PC-9 (cell line): ENCODE measurements at regions of chr3 and their contacts with region 1.

Region 1: DNA sequence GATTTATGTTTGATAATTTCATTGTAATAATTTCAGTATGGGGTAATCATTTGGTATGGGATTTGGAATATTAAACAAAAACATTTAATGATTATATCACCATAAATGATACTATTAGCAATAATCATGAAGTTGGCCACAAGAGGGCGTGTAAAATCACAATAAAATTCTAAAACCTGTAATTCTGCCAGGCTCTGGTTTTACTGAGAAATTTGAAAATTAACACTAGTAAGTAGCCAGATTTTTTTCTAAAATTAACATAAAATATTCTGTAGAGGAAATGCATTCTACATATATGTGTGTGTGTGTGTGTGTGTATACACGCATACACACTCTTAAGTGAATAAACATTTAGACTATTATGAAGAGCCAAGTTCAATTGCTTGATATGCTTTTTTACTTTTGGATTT is 40.5 kb downstream of the FEZF2 start:
- DNase-seq: no peak
- H3K4me3 ChIP-seq: no peak overlapping the region
- H3K27ac ChIP-seq: no peak overlapping the region
- H3K4me1 ChIP-seq: no peaks in the 10 kb centered on the region
- H3K27me3 ChIP-seq: no peaks in the 10 kb centered on the region
- CTCF ChIP-seq: peak; percentile 70

Region 2: GRCh38 chr3:62558549-62559112 is 225.8 kb after region 1 on chr3:
- CTCF ChIA-PET with region 1: no interaction called
- POLR2A ChIA-PET with region 1: no interaction called
- intact Hi-C with region 1: loop called (anchors 1 kb)
- DNase-seq: no peak
- H3K4me3 ChIP-seq: no peak overlapping the region
- H3K27ac ChIP-seq: no peak overlapping the region
- H3K4me1 ChIP-seq: no peaks in the 10 kb centered on the region
- H3K27me3 ChIP-seq: no peaks in the 10 kb centered on the region
- CTCF ChIP-seq: peak; percentile 66

Region 3: GRCh38 chr3:62970648-62971047 is 637.8 kb after region 1 on chr3:
- CTCF ChIA-PET with region 1: no interaction called
- POLR2A ChIA-PET with region 1: no interaction called
- intact Hi-C with region 1: no loop called
- DNase-seq: no peak
- H3K4me3 ChIP-seq: no peak overlapping the region
- H3K27ac ChIP-seq: no peak overlapping the region
- H3K4me1 ChIP-seq: no peaks in the 10 kb centered on the region
- H3K27me3 ChIP-seq: no peaks in the 10 kb centered on the region
- CTCF ChIP-seq: no peak

Region 4: GRCh38 chr3:63218133-63218532 is 885.3 kb after region 1 on chr3:
- CTCF ChIA-PET with region 1: no interaction called
- POLR2A ChIA-PET with region 1: no interaction called
- intact Hi-C with region 1: no loop called
- DNase-seq: no peak
- H3K4me3 ChIP-seq: no peak overlapping the region
- H3K27ac ChIP-seq: no peak overlapping the region
- H3K4me1 ChIP-seq: no peaks in the 10 kb centered on the region
- H3K27me3 ChIP-seq: no peaks in the 10 kb centered on the region
- CTCF ChIP-seq: no peak